Activated B cell treated with CpG ODN at 0.5 μM for 24 hours (primary cell): ENCODE measurements at regions of chr12 and their contacts with region 1.

Region 1: GRCh38 chr12:68807576-68808387 is at the start of gene MDM2:
- DNase-seq: peak; percentile 94
- ATAC-seq: peak; percentile 87
- H3K4me3 Mint-ChIP-seq: peak within 1 kb of the TSS; percentile 92
- H3K27ac Mint-ChIP-seq: peak within 1 kb of the TSS; percentile 98
- H3K4me1 Mint-ChIP-seq: peaks cover 18% of the 10 kb centered on the region
- H3K27me3 Mint-ChIP-seq: no peaks in the 10 kb centered on the region
- CTCF ChIP-seq: no peak
- total RNA-seq, gene MDM2: 69.8 and 90.8 TPM in 2 replicates

Region 2: DNA sequence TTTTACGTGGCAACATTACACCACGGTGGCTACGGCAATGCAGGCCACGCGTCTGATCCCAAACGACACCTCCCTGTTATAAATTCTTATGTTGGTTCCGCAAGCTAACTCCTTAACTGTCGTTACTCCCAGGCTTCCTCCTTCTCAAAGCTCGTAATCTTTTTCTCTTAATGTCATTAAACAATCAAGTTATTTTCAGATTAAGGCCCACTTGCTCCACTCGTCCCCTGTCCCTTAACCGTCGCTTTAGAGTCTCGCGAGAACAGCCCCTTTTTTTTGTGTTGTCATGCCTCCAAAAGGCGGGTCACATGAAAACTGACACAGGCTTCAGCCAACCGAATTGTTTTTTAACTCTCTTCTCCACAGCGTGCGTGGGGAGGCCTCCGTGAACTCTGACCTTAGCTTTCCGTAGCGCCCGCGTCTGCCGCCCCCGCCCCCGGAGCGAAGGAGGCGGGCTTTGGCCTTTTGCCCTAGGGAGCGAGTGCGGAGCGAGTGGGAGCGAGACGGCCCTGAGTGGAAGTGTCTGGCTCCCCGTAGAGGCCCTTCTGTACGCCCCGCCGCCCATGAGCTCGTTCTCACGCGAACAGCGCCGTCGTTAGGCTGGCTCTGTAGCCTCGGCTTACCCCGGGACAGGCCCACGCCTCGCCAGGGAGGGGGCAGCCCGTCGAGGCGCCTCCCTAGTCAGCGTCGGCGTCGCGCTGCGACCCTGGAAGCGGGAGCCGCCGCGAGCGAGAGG is 1538.7 kb before region 1 on chr12 and contains the start of gene CAND1:
- CTCF ChIA-PET with region 1: no interaction called
- POLR2A ChIA-PET with region 1: interaction called, 8 read pairs
- intact Hi-C with region 1: loop called (anchors 1 kb)
- DNase-seq: peak; percentile 95
- ATAC-seq: peak; percentile 79
- H3K4me3 Mint-ChIP-seq: peak within 1 kb of the TSS; percentile 92
- H3K27ac Mint-ChIP-seq: peak within 1 kb of the TSS; percentile 99
- H3K4me1 Mint-ChIP-seq: peaks cover 44% of the 10 kb centered on the region
- H3K27me3 Mint-ChIP-seq: no peaks in the 10 kb centered on the region
- CTCF ChIP-seq: no peak
- total RNA-seq, gene CAND1: 123 and 125 TPM in 2 replicates

Region 3: DNA sequence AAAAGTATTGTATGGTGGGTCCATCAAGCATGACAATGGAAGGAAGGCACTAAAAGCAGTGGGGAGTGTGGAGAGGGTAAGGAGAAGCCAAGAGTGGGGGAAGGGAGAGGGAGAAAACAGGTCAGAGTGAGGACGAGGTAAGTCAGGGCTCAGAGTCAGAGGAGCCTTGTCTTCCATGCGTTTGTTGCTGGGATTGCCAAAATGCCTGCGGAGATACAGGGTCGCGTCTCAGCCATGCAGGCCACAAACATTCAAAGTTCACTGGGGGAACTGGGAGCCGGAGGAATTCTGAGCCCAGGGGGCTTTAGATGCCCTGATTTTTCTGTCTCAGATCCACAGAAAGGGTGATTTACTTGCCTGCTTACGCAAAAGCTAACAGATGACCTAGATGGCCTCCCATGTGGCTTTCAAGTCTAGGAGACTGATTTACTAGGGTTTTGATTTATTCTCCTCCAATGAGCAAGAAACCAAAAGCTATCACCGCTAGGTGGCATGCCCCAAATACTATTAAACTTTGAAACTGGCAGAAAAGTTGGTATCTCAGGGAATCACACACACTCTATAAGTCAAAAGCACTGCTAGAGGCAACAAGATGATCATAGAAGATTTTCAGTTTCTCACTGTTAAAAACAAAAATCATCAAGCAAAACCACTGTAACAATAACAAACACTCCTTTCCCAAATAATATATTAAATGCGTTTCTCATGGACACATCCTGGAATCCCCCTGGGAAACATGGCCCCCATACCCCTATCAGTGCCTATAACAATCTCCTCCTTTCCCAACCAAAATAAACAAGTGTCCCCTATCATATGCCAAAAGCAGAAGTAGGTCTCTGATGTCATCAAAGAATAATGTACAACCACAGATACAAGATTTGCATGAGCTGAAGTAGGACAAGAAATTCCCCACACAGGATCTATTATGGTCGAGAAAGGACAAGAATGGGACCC is 449.0 kb before region 1 on chr12:
- CTCF ChIA-PET with region 1: interaction called, 3 read pairs
- POLR2A ChIA-PET with region 1: interaction called, 5 read pairs
- intact Hi-C with region 1: loop called (anchors 1 kb)
- DNase-seq: no peak
- ATAC-seq: peak; percentile 81
- H3K4me3 Mint-ChIP-seq: peak overlapping the region; percentile 62
- H3K27ac Mint-ChIP-seq: peak overlapping the region; percentile 92
- H3K4me1 Mint-ChIP-seq: peaks cover 28% of the 10 kb centered on the region
- H3K27me3 Mint-ChIP-seq: no peaks in the 10 kb centered on the region
- CTCF ChIP-seq: no peak

Region 4: GRCh38 chr12:68686595-68687521 is 120.9 kb before region 1 on chr12 and contains the start of gene NUP107:
- CTCF ChIA-PET with region 1: no interaction called
- POLR2A ChIA-PET with region 1: interaction called, 7 read pairs
- intact Hi-C with region 1: loop called (anchors 1 kb)
- DNase-seq: peak; percentile 93
- ATAC-seq: peak; percentile 97
- H3K4me3 Mint-ChIP-seq: peak within 1 kb of the TSS; percentile 98
- H3K27ac Mint-ChIP-seq: peak within 1 kb of the TSS; percentile 97
- H3K4me1 Mint-ChIP-seq: peaks cover 33% of the 10 kb centered on the region
- H3K27me3 Mint-ChIP-seq: no peaks in the 10 kb centered on the region
- CTCF ChIP-seq: no peak
- total RNA-seq, gene NUP107: 75.0 and 90.8 TPM in 2 replicates

Region 5: GRCh38 chr12:68821357-68822188 is 13.8 kb after region 1 on chr12:
- CTCF ChIA-PET with region 1: no interaction called
- POLR2A ChIA-PET with region 1: interaction called, 11 read pairs
- intact Hi-C with region 1: no loop called
- DNase-seq: no peak
- ATAC-seq: no peak
- H3K4me3 Mint-ChIP-seq: no peak overlapping the region
- H3K27ac Mint-ChIP-seq: peak overlapping the region; percentile 46
- H3K4me1 Mint-ChIP-seq: peaks cover 14% of the 10 kb centered on the region
- H3K27me3 Mint-ChIP-seq: no peaks in the 10 kb centered on the region
- CTCF ChIP-seq: no peak

Region 6: DNA sequence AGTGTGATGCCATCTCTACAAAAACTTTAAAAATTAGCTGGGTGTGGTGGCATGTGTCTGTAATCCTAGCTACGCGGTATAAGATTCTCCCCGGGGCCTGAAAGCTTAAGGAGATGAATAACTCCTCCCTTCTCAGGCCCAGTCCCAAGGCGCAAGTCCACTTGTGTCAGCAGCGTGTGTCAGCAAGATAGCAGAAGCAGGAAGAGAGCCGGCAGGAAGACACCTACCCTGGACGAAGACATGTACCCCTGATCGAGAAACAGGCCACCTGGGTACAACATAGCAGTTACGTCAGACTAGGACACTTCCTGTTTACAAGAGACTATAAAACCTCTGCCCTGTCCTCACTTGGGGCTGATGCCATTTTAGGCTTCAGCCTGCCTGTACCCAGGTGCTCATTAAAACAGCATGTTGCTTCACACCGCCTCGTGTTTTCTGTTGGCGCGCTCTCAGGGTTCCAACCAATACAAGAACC is 81.9 kb after region 1 on chr12:
- CTCF ChIA-PET with region 1: no interaction called
- POLR2A ChIA-PET with region 1: no interaction called
- intact Hi-C with region 1: no loop called
- DNase-seq: no peak
- ATAC-seq: peak; percentile 73
- H3K4me3 Mint-ChIP-seq: no peak overlapping the region
- H3K27ac Mint-ChIP-seq: peak overlapping the region; percentile 73
- H3K4me1 Mint-ChIP-seq: peaks cover 21% of the 10 kb centered on the region
- H3K27me3 Mint-ChIP-seq: no peaks in the 10 kb centered on the region
- CTCF ChIP-seq: no peak

Region 7: DNA sequence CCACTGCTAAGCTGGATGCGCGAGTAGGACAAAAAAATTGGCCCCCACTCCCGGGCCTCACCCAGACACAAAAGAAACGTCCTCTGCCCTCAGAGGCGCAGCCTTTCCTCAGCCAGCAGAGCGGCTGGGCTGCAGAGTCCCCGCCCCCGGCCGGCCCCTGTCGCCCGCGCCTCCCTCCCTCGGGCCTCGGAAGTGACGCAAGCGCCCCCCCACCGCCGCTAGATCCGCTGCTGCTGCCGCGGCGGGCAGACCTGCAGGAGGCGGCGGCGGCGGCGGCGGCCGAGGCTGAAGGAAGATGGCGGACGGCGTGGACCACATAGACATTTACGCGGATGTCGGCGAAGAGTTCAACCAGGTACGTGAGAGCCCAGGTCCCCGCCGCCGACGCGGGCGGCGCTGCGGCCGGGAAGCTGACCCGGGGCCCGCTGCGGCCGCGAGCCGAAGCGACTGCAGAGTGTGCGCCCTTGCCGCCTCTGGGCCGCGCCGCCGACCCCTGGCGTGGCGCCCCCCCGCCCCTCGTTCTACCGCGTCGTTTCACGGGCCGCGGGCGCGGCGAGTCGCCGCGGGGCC is 431.7 kb after region 1 on chr12 and contains the start of gene CPSF6:
- CTCF ChIA-PET with region 1: no interaction called
- POLR2A ChIA-PET with region 1: interaction called, 3 read pairs
- intact Hi-C with region 1: loop called (anchors 1 kb)
- DNase-seq: peak; percentile 96
- ATAC-seq: peak; percentile 93
- H3K4me3 Mint-ChIP-seq: peak within 1 kb of the TSS; percentile 99
- H3K27ac Mint-ChIP-seq: peak within 1 kb of the TSS; percentile 96
- H3K4me1 Mint-ChIP-seq: peaks cover 51% of the 10 kb centered on the region
- H3K27me3 Mint-ChIP-seq: no peaks in the 10 kb centered on the region
- CTCF ChIP-seq: no peak
- total RNA-seq, gene CPSF6: 95.5 and 104 TPM in 2 replicates

Region 8: DNA sequence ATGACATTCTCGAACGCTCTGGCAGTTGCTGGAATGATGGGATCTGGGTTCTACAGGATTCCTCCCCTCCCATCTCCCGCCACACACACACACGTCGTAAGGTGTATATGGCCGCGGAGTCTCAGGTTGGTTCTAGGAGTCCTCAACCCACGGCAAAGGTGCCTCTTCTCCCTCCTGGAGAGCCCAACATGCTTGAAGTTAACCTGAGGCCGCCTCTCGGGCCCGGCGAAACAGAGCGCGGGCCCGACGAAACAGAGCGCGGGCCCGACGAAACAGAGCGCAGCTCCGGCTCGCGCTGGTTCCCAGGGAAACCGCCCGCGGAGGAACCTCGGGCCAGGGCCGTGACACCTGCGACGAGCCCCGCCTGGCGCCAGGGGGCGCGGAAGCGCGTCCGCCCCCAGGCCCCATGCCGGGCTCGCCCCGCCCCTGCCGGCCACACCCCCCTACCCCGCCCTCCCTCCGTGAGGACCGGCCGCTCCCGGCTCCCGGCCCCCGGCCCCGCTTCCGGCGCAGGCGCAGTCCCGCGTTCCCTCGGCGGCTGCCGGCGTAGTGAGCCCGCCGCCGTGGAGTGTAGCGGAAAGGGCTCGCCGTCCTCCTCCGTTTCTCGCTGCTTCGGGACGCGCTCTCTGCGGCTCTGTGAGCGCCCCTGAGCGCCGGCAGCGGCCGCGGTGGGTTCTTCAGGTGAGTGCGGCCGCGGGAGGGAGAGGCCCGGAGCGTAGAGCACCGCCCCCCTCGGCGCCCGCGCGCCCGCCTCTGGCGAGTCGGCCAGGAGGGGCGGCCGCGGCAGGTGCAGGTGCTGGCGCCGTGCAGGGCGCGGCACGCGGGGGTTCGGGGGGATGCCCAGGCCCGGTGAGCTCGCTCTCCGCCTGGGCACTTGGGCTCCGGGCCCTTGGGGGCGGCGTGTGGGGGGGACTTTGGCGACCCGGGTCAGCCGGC is 930.8 kb after region 1 on chr12 and contains the start of gene RAB3IP:
- CTCF ChIA-PET with region 1: no interaction called
- POLR2A ChIA-PET with region 1: no interaction called
- intact Hi-C with region 1: loop called (anchors 1 kb)
- DNase-seq: peak; percentile 93
- ATAC-seq: peak; percentile 90
- H3K4me3 Mint-ChIP-seq: peak within 1 kb of the TSS; percentile 85
- H3K27ac Mint-ChIP-seq: peak within 1 kb of the TSS; percentile 73
- H3K4me1 Mint-ChIP-seq: peaks cover 19% of the 10 kb centered on the region
- H3K27me3 Mint-ChIP-seq: peaks cover 4% of the 10 kb centered on the region
- CTCF ChIP-seq: no peak
- total RNA-seq, gene RAB3IP: 34.6 and 37.9 TPM in 2 replicates